CD4-positive, alpha-beta memory T cell (primary cell): ENCODE measurements at regions of chr22 and their contacts with region 1.

Region 1: DNA sequence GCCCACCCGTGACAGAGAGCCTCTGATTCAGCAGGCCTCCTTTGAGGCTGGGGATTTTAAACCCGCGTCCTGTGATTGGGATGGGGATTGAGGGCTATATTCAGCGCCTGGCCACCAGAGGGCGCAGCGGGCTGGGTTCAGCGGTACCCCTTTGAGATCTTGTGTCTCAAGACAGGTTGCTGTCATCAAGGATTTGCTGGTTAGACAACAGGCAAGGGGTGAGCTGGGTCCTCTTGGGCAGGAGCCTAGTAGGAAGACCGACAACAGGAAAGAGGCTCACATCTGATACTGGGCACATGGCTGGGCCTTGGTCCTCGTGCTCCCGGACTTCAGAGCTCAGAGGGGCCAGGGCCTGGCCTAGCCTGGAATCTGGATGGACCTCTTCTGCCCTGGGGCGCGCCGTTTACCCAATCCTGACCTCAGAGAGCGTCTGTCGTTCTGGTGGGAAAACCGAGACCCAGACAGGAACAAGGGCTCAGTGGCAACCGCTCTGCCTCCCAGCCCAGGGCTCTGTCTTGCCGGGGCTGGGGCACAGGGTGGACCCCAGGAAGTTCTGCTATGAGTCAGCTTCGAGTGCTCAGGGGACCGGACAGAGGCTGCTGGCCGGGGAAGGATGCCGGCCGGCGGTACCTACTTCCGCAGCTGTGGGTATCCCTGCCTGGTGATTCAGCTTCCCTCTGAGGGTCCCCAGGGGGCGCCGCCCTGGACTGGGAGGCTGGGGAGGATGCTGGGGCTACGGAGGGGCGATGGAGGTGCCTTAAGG is 929 bp upstream of the SLC35E4 start:
- DNase-seq: peak; percentile 84 to 87 (median 86)
- H3K4me3 ChIP-seq: peak overlapping the region; percentile 81 to 91
- H3K4me3 Mint-ChIP-seq: peak overlapping the region; percentile 81 to 95 (median 84)
- H3K27ac ChIP-seq: peak overlapping the region; percentile 79
- H3K27ac Mint-ChIP-seq: peak overlapping the region; percentile 88 to 98 (median 93)
- H3K4me1 ChIP-seq: peaks cover 34% of the 10 kb centered on the region
- H3K4me1 Mint-ChIP-seq: peaks cover 10 to 29% (median 16%) of the 10 kb centered on the region in 4 donors
- H3K27me3 ChIP-seq: no peaks in the 10 kb centered on the region
- H3K27me3 Mint-ChIP-seq: no peaks in the 10 kb centered on the region

Region 2: GRCh38 chr22:30649430-30650007 is 14.9 kb after region 1 on chr22:
- CTCF ChIA-PET with region 1: interaction called, 20 read pairs
- POLR2A ChIA-PET with region 1: interaction called, 19 read pairs
- intact Hi-C with region 1: no loop called
- DNase-seq: peak in 4 of 5 donors; percentile 4 to 82 (median 21)
- H3K4me3 ChIP-seq: no peak overlapping the region
- H3K4me3 Mint-ChIP-seq: no peak overlapping the region
- H3K27ac ChIP-seq: no peak overlapping the region
- H3K27ac Mint-ChIP-seq: peak overlapping the region; percentile 41 to 84 (median 73)
- H3K4me1 ChIP-seq: peaks cover 9% of the 10 kb centered on the region
- H3K4me1 Mint-ChIP-seq: peaks cover 4 to 22% (median 10%) of the 10 kb centered on the region in 4 donors
- H3K27me3 ChIP-seq: no peaks in the 10 kb centered on the region
- H3K27me3 Mint-ChIP-seq: no peaks in the 10 kb centered on the region

Region 3: DNA sequence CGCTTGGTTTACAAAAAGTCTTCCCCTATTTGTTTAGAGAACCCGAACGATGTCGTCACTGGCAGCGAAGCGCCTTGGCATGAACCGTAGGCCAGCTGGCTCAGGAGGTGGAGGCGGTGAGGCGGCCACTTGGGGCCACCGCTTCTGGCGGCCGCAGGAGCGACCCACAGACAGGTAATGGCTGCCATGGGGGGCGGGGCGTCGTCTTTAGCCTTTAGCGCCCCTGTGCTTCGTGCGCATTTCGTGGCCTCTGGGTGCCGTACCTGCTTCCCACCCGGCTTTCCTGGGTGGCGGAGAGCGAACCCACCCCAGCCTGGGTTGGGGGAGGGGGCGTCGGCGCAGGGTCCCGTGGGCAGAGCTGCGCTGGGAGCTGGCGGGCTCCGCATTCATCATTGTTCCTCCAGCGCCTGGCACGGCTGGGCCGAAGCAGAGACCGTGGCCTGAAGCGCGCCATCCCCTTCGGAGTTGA is 59.6 kb after region 1 on chr22:
- CTCF ChIA-PET with region 1: interaction called, 9 read pairs
- POLR2A ChIA-PET with region 1: interaction called, 4 read pairs
- intact Hi-C with region 1: loop called (anchors 1 kb)
- DNase-seq: peak; percentile 34 to 53 (median 41)
- H3K4me3 ChIP-seq: peak overlapping the region in 1 of 2 donors; percentile 69
- H3K4me3 Mint-ChIP-seq: peak overlapping the region; percentile 92 to 98 (median 94)
- H3K27ac ChIP-seq: no peak overlapping the region
- H3K27ac Mint-ChIP-seq: peak overlapping the region in 6 of 7 donors; percentile 57 to 93 (median 82)
- H3K4me1 ChIP-seq: peaks cover 10% of the 10 kb centered on the region
- H3K4me1 Mint-ChIP-seq: peaks cover 9 to 26% (median 12%) of the 10 kb centered on the region in 4 donors
- H3K27me3 ChIP-seq: no peaks in the 10 kb centered on the region
- H3K27me3 Mint-ChIP-seq: peaks cover 1 to 6% of the 10 kb centered on the region in 2 donors

Region 4: GRCh38 chr22:30920407-30920806 is 285.8 kb after region 1 on chr22:
- CTCF ChIA-PET with region 1: interaction called, 79 read pairs
- POLR2A ChIA-PET with region 1: interaction called, 25 read pairs
- intact Hi-C with region 1: loop called (anchors 1 kb)
- DNase-seq: peak; percentile 71 to 78 (median 77)
- H3K4me3 ChIP-seq: no peak overlapping the region
- H3K4me3 Mint-ChIP-seq: peak overlapping the region; percentile 69 to 86 (median 76)
- H3K27ac ChIP-seq: no peak overlapping the region
- H3K27ac Mint-ChIP-seq: peak overlapping the region in 5 of 7 donors; percentile 5 to 80 (median 73)
- H3K4me1 ChIP-seq: peaks cover 23% of the 10 kb centered on the region
- H3K4me1 Mint-ChIP-seq: peaks cover 7 to 20% (median 14%) of the 10 kb centered on the region in 4 donors
- H3K27me3 ChIP-seq: no peaks in the 10 kb centered on the region
- H3K27me3 Mint-ChIP-seq: no peaks in the 10 kb centered on the region

Region 5: GRCh38 chr22:31080848-31081649 is 446.4 kb after region 1 on chr22 and contains the start of gene SMTN:
- CTCF ChIA-PET with region 1: interaction called, 20 read pairs
- POLR2A ChIA-PET with region 1: interaction called, 11 read pairs
- intact Hi-C with region 1: loop called (anchors 1 kb)
- DNase-seq: peak; percentile 82 to 86 (median 84)
- H3K4me3 ChIP-seq: peak within 1 kb of the TSS; percentile 0 to 71
- H3K4me3 Mint-ChIP-seq: peak within 1 kb of the TSS; percentile 85 to 92 (median 90)
- H3K27ac ChIP-seq: peak within 1 kb of the TSS; percentile 25
- H3K27ac Mint-ChIP-seq: peak within 1 kb of the TSS; percentile 52 to 87 (median 73)
- H3K4me1 ChIP-seq: peaks cover 43% of the 10 kb centered on the region
- H3K4me1 Mint-ChIP-seq: peaks cover 18 to 40% (median 28%) of the 10 kb centered on the region in 4 donors
- H3K27me3 ChIP-seq: no peaks in the 10 kb centered on the region
- H3K27me3 Mint-ChIP-seq: no peaks in the 10 kb centered on the region
- total RNA-seq, gene SMTN: 1.6 to 1.7 TPM

Region 6: DNA sequence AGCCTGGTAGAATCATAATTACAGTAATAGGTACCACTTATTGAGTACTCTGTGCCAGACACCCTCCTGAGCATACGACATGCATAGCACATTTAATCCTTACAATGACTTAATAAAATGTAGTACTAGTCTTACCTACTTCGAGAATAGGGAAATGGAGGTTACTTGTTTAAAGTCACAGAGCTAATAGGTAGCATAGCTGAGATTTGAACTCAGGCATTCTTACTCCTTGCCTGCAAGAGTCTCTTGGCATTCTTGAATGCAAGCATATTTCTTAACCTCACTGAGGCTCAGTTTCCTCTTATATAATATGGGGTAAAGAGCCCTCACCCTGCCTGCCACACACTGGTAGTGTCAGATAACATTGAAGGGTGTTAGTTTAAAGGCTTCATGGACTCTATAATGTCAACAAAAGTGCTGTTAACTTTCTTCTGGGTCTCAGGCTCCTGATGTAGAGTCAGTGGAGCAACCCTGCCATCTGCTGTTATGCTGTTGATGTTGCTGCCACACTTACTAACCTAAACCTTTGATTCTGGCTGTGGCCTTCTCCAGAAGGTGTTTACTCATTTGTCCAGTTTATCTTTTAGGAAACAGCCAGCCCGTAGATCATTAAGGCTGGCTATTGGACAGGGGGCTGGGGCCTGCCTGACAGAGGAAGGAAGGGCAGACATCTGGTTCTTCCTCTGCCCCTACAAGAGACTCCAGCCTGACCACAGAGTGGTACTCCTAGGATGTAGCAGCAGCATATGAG is 596.4 kb after region 1 on chr22:
- CTCF ChIA-PET with region 1: interaction called, 5 read pairs
- POLR2A ChIA-PET with region 1: no interaction called
- intact Hi-C with region 1: loop called (anchors 1 kb)
- DNase-seq: peak; percentile 60 to 65 (median 61)
- H3K4me3 ChIP-seq: no peak overlapping the region
- H3K4me3 Mint-ChIP-seq: peak overlapping the region in 6 of 8 donors; percentile 21 to 84 (median 56)
- H3K27ac ChIP-seq: peak overlapping the region; percentile 43
- H3K27ac Mint-ChIP-seq: peak overlapping the region; percentile 81 to 96 (median 92)
- H3K4me1 ChIP-seq: peaks cover 30% of the 10 kb centered on the region
- H3K4me1 Mint-ChIP-seq: peaks cover 36 to 68% (median 54%) of the 10 kb centered on the region in 4 donors
- H3K27me3 ChIP-seq: no peaks in the 10 kb centered on the region
- H3K27me3 Mint-ChIP-seq: no peaks in the 10 kb centered on the region